ENCODE measurements at regions of chr10 and their contacts with region 1.

Region 1: DNA sequence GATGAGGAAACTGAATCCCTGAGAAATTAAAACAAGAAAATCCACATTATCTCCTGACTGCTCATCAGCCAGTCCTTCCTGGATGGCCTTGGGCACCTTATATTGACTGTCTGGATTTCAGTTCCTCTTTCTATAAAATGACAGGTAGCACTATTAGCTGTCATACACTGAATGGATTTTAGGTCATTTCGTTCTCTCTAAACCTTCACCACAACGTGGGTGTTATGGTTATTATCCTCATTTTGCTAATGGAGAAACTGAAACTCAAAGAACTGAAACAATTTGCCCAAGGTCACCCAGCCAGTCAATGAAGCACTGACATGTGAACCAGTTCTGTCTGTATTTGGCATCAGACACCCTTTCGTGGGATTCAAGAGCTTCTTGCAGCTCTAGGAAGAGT is 193.8 kb downstream of the CYP26A1 start:
- DNase-seq: no peak
- ATAC-seq: no peak

Region 2: DNA sequence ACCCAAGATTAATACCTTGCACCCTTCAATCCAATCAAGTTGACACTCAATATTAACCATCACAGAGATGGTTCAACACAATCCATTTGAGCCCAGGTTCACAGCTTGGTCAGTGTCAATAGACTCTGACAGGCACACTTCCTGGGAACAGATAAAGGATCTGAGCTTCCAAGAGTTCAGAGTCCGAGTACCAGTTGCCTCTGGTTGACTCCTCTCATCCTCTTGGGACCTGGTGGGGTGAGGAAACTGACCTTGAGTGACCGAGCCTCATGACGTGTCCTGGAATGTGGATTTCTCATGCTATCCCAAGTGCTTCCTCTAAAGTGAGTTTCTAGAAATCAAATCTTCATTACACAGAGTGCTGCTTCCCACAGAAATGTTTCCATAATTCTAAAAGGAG is 31.8 kb before region 1 on chr10:
- intact Hi-C with region 1: loop called (anchors 1 kb)
- DNase-seq: no peak
- ATAC-seq: peak; percentile 53